Activated naive CD4-positive, alpha-beta T cell treated with anti-CD3 and anti-CD28 coated beads for 36 hours (primary cell): ENCODE measurements at regions of chr3 and their contacts with region 1.

Region 1: DNA sequence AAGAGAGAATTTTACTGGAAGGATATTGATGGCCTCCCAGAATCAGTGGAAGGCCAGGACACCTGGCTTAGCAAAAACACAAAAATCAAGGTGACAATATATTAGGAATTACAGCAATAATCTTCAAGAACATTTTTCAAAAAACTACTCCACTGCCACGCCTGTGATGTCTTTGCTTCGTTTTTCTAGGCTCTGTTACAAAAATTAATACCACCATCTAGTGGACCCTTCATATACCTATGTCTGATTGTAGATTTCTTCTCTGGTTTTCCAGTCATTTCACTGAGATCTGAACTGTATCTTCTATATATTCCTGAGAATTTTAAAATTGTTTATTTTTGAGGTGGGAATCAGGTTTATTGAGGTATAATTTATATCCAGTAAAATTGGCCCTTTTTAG is 5.6 kb upstream of the SLC33A1 start:
- DNase-seq: no peak
- H3K4me3 Mint-ChIP-seq: no peak overlapping the region
- H3K27ac Mint-ChIP-seq: no peak overlapping the region
- H3K4me1 Mint-ChIP-seq: peaks cover 17% of the 10 kb centered on the region
- H3K27me3 Mint-ChIP-seq: no peaks in the 10 kb centered on the region

Region 2: DNA sequence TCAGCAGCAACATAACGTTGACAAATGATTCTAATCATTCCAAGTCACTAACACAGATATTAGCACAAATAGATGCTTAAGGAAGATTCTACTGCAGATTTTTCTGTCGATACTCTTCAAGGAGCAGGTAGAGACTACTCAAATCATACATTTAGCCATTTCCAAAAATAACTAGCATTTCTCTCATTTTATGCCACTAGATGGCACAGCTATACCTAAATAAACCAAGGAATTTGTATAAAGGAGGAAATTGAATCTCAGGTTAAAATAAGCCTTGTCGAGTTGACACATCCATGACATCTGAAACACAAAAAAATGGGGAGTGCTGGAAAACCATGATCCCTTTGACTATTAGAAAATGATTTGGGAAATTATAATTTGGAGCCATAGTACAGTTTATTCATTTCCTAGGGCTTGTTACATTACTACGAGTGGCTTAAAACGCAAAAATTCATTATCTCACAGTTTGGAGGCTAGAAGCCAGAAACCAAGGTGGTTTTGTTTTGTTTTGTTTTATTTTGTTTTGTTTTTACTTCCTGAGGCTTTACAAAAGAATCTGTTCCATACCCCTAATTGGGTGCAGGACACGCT is 506.9 kb before region 1 on chr3:
- CTCF ChIA-PET with region 1: no interaction called
- intact Hi-C with region 1: loop called (anchors 1 kb)
- DNase-seq: no peak
- H3K4me3 Mint-ChIP-seq: no peak overlapping the region
- H3K27ac Mint-ChIP-seq: no peak overlapping the region
- H3K4me1 Mint-ChIP-seq: no peaks in the 10 kb centered on the region
- H3K27me3 Mint-ChIP-seq: peaks cover 9% of the 10 kb centered on the region

Region 3: GRCh38 chr3:155753036-155753639 is 106.7 kb before region 1 on chr3:
- CTCF ChIA-PET with region 1: no interaction called
- intact Hi-C with region 1: loop called (anchors 1 kb)
- DNase-seq: peak; percentile 22
- H3K4me3 Mint-ChIP-seq: no peak overlapping the region
- H3K27ac Mint-ChIP-seq: no peak overlapping the region
- H3K4me1 Mint-ChIP-seq: no peaks in the 10 kb centered on the region
- H3K27me3 Mint-ChIP-seq: no peaks in the 10 kb centered on the region